ENCODE measurements at regions of chr18 and their contacts with region 1.

Region 1: DNA sequence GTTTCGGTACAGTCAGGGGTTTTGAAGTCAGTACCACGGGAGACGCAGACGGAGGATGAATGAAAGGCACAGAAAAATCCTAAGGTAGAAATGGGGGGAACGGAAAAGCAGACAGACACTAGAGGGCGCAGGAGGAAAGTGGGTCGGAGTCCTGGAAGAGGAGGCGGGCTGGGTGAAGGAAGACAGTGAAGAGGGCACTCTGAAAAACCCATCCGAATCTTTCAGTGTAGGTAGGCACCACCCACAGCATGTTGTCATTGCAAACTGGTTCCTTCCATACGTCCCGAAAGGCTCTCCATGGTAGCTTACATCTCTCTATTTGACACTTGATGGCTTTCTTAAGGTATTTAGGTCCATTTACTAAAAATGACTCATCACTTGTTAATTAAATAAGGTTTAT is 18.5 kb upstream of the ZNF236 start:
- DNase-seq: peak; percentile 57 to 79
- ATAC-seq: peak; percentile 73

Region 2: DNA sequence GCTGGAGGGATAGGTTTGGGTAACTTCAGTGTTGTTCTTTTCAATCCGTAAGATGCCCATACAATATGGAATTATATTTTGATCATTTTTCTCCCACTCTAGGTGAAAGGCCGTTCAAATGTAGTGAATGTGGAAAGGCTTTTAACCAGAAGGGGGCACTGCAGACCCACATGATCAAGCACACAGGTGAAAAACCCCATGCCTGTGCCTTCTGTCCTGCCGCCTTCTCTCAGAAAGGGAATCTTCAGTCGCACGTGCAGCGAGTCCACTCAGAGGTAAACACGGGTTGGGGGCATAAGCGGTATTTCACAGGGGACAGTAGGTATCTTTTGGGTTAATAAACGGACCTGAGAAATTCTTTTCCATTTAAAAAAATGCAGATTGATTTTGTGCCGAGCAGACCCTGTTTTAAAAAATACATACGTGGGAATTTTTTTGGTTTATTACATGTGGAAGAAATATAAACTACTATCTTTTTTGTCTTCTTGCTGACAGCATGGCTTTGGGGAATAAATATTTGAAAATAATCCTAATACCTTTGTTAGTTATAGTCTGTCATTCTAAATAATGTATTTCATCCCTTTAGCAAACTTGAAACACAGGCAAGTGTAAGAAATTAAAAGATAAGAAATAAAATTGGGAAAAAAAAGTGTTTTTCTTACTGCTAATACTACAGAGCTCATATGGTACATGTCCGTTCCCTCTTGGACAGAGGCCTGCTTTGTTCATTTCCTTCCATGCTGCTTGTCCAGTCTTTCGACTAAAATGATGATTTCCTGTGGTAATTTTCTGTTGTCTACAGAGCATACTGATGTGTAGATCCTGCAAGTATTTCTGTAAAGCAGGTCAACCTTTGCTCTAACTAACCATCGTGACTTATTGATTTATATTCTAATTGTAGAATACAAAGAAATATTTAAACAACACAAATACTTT is 71.8 kb after region 1 on chr18:
- intact Hi-C with region 1: loop called in 1 of 2 experiments (anchors 10 kb)
- DNase-seq: peak; percentile 51 to 57
- ATAC-seq: peak; percentile 93

Region 3: DNA sequence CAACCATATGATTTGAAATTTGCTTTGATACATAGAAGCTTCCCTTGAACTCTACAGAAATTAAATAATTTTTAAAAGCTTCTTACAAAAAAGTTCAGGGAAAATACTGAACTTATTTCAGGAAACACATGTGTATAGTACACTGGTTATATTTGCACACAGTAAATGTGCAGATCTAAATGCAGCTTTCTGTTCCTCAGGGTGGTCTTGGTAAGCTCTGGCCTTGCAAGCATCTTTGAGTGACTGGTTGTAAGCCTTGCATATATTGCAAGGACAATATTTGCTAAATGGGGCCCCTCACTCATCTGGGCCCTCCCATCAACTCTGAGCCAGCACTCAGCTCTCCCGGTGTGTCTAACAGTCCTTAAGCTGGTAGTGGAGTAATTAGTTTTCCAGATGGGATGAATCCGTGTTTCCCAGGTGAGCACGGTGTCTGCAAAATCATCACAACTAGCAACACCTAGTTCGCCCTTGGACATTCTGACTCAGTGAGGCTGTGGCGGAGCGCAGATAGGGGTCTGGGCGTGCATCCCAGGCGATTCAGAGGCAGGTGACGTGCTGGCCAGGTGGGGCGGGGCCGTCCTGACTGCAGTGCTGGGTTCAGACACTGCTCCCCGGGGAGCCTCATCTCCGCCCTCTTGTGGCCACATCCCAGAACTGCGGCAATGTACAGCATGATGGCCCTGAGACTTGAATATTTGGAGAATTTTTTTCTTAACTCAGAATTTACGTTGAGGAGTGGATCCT is 179.2 kb after region 1 on chr18:
- intact Hi-C with region 1: loop called in 1 of 2 experiments (anchors 10 kb)
- DNase-seq: peak; percentile 87 to 95
- ATAC-seq: peak; percentile 73